Activated T-helper 1 cell treated with anti-CD3 and anti-CD28 coated beads, Interleukin-12 subunit alpha, Interleukin-12 subunit beta, Interleukin-2, Interleukin-4 antibody, amounts not matched to agents 30 ng/mL and 10 ng/mL and 1 ng/mL, durations not matched to agents 14 hours and 24 hours and 36 hours (primary cell): ENCODE measurements at regions of chr3 and their contacts with region 1.

Region 1: GRCh38 chr3:48918388-48919214 is at the start of gene ARIH2:
- DNase-seq: peak; percentile 87
- H3K4me3 Mint-ChIP-seq: peak within 1 kb of the TSS; percentile 92
- H3K27ac Mint-ChIP-seq: peak within 1 kb of the TSS; percentile 97
- H3K4me1 Mint-ChIP-seq: peaks cover 14% of the 10 kb centered on the region
- H3K27me3 Mint-ChIP-seq: no peaks in the 10 kb centered on the region
- total RNA-seq, gene ARIH2: 179 and 180 TPM in 2 replicates

Region 2: DNA sequence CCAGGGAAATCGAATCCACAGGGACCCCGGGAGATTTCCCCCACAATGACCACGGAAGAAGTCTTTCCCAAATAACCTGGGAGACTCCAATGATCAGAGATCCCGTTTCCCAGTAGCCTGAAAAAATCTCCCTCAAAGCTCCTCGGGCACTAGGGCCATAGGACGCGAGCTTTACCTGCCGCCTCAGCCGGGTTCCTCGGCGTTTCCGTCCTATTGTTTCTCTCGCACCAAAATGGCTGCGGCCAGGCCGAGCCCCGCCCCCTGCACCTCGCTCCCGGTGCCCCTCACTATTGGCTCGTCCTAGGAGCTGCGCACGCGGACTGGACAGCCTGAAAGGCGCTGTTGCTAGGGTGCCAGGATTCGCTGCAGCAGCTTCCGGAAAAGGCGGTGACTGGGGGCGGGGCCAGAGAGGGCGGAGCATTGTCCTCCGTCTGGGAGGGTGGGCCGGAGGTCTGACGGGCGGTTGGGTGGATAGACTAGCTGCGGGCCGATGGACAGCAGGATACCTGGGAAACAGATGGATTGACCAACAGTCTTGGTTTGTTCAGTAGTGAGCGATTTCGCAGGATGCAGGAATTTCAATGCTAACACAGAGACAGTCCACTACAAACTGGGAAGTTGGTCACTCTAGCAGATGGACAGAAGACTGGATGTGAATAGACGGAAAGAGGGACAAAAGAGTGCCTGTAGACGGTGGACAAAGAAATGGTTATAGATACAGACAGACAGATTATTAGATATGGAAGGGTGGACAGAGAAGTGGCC is 201.4 kb before region 1 on chr3 and contains the start of gene IP6K2:
- intact Hi-C with region 1: loop called (anchors 1 kb)
- DNase-seq: peak; percentile 98
- H3K4me3 Mint-ChIP-seq: peak within 1 kb of the TSS; percentile 98
- H3K27ac Mint-ChIP-seq: peak within 1 kb of the TSS; percentile 94
- H3K4me1 Mint-ChIP-seq: peaks cover 29% of the 10 kb centered on the region
- H3K27me3 Mint-ChIP-seq: peaks cover 17% of the 10 kb centered on the region
- total RNA-seq, gene IP6K2: 59.9 and 61.0 TPM in 2 replicates

Region 3: DNA sequence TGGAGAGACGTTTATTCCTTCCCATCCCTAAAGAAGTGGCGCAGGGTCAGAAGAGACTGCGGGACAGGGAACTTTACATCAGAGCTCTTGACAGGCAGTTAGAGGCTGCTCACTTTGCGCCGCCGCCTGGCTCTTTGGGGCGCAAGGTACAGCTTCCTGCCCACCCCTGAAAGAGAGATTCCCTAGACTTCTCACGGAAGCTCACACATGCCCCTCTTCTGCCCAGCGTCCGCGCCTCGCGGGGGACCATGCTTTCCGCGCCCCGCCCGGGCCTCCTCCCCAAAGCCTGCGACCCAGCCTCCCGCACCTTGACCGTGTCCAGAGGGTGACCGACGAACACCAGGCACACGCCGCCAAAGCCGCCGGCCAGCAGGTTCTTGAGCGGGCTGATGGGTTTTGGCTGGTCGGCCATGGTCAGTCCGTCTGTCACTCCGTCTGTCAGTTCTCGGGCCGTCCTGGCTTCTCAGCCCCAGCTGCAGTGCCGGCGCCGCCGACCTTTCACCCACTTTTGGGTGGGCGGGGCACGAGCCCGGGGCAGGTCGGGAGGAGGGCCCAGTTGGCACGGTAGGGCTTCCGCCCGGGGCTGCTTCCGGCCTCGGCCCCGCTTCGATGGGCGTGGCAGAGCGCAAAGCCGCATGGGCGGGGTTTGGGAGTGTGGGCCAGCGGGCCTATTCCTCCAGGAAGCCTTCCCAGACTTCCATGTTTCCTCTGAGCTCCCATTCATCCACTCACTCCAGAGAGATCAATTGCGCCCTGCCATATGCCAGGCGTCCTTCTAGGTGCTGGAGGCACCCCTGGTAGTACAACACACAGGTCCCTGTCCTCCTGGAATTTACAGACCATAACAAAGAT is 20.0 kb before region 1 on chr3 and contains the start of gene SLC25A20:
- intact Hi-C with region 1: loop called (anchors 1 kb)
- DNase-seq: peak; percentile 92
- H3K4me3 Mint-ChIP-seq: peak within 1 kb of the TSS; percentile 94
- H3K27ac Mint-ChIP-seq: peak within 1 kb of the TSS; percentile 95
- H3K4me1 Mint-ChIP-seq: peaks cover 29% of the 10 kb centered on the region
- H3K27me3 Mint-ChIP-seq: no peaks in the 10 kb centered on the region
- total RNA-seq, gene SLC25A20: 15.9 and 17.4 TPM in 2 replicates

Region 4: GRCh38 chr3:49021813-49022687 is 103.4 kb after region 1 on chr3 and contains the start of gene NDUFAF3:
- intact Hi-C with region 1: loop called (anchors 1 kb)
- DNase-seq: peak; percentile 91
- H3K4me3 Mint-ChIP-seq: peak within 1 kb of the TSS; percentile 91
- H3K27ac Mint-ChIP-seq: peak within 1 kb of the TSS; percentile 99
- H3K4me1 Mint-ChIP-seq: peaks cover 41% of the 10 kb centered on the region
- H3K27me3 Mint-ChIP-seq: no peaks in the 10 kb centered on the region
- total RNA-seq, gene NDUFAF3: 126 and 129 TPM in 2 replicates